Dendritic cell treated with granulocyte-macrophage colony-stimulating factor and Interleukin-4, amounts not matched to agents 40 ng/mL and 50 ng/mL, for 4 days (primary cell): ENCODE measurements at regions of chr12 and their contacts with region 1.

Region 1: DNA sequence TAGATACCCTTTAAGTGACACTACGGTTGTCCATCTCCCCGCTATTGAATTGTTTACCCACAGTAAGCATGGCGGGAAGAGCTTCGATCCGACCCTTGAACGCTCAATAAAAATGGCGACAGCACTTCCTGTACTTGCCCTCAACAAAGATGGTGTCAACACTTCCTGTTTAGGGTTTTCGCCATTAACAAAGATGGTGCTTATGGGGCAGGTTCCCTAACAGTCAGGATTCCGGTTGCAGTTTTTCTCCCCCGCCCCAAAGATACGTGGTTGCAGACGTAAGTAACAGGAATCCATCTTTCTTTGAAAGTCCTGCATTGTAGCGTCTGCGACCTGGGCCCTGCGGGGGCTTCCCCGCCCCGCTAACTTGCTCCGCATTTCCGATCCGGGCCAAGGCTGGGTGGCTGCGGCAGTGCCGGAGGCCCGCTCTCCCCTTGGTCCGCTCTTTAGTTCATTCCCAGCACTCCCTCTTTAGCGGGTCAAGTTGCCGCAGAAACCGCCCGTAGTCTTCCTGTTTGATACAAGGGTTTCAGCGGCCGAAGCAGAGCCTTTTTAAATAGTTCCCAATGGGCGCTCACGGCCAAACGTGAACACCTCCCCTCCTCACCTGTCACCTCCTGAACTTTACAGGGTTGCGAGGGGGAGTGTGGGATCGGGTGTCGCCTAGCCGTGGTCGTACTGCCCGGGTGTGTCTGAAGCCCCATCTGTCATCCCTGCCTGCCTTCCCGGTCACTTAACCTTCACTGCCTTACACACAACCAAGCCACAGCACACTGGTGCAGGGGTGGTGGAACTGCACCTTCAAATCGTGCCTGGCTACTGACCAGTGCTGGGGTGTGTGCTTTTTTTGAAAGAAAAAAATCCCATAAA is at the start of gene CRADD:
- H3K4me3 Mint-ChIP-seq: peak within 1 kb of the TSS; percentile 89
- H3K27ac Mint-ChIP-seq: peak within 1 kb of the TSS; percentile 100
- H3K4me1 Mint-ChIP-seq: peaks cover 20% of the 10 kb centered on the region
- H3K27me3 Mint-ChIP-seq: peaks cover 5% of the 10 kb centered on the region

Region 2: DNA sequence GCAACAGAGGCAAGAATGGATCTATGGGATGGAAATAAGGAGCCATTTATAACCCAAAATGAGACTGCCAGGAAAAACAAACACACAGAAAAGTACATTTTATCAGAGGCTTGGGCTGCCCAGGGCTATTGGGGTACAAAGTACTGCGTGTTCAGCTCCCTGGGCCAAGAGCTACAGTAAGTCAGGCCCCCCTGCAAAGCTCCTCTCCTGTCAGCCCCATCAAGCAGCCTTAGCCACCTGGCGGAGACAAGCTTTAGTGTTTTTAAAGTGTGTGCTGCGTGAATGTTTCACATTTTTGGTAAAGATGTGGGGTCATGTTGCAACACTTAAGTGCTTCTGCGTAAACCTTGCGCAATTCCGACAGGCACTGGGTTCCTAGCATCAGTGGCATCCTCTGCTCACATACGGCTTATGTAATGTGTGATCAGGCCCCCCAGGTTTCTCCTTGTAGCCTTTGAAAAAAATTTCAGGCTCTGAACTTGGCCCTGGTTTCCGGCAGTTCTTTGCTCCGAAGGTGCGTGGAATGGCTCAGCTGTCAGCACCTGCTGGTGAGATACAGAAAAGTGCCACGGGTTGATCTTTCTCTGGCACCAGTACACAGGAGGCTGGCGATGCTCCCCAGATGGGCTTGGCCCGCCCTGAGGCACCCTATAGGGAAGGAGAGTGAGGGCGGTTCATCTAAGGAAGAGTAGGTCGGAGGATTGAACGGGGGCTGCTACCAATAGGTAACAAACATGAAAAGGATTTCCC is 549.7 kb before region 1 on chr12:
- intact Hi-C with region 1: no loop called
- H3K4me3 Mint-ChIP-seq: no peak overlapping the region
- H3K27ac Mint-ChIP-seq: no peak overlapping the region
- H3K4me1 Mint-ChIP-seq: peaks cover 29% of the 10 kb centered on the region
- H3K27me3 Mint-ChIP-seq: no peaks in the 10 kb centered on the region

Region 3: GRCh38 chr12:93591137-93591868 is 86.1 kb before region 1 on chr12:
- intact Hi-C with region 1: loop called (anchors 5 kb)
- H3K4me3 Mint-ChIP-seq: peak overlapping the region; percentile 77
- H3K27ac Mint-ChIP-seq: peak overlapping the region; percentile 95
- H3K4me1 Mint-ChIP-seq: peaks cover 16% of the 10 kb centered on the region
- H3K27me3 Mint-ChIP-seq: peaks cover 60% of the 10 kb centered on the region

Region 4: DNA sequence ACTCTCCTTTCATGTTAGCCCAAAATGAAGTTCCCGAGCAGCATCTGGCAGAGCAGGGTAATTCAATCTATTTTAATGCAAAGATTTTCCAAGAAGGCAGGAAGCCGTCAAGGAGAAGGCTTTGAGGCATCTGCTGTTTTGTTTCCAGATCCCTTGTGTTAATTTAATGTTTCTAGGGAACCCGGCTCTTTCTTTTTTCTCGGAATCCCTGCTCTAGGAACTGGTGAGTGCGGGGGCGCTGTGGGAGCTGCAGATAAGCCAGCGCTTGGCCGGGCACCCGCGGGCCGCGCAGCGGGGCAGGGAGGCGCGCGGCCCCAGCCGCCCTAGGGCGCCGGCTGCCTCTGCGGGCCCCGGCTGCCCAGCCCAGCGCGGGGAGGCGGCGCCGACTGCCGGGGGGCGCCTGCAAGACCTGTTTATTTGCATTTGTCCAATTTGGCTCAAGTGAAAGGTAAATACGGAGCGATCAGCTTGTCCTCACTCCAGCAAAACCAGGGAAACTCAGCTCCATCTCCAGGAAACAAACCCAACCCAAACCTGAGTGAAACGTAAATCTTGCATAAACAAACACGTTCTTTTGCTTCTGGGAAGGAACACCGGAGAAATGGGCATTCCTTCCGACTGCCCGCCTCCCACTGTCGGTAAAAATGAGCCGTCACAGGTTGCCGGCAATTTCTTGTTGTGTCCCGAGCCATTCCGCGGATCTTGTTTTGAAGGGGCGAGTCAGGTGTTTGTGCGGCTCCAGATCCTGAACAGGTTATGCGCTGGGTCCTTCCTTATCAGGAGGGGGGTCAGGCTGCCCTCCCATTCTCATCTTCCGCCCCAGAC is 64.9 kb after region 1 on chr12:
- intact Hi-C with region 1: loop called (anchors 1 kb)
- H3K4me3 Mint-ChIP-seq: peak overlapping the region; percentile 80
- H3K27ac Mint-ChIP-seq: peak overlapping the region; percentile 93
- H3K4me1 Mint-ChIP-seq: peaks cover 50% of the 10 kb centered on the region
- H3K27me3 Mint-ChIP-seq: peaks cover 2% of the 10 kb centered on the region

Region 5: DNA sequence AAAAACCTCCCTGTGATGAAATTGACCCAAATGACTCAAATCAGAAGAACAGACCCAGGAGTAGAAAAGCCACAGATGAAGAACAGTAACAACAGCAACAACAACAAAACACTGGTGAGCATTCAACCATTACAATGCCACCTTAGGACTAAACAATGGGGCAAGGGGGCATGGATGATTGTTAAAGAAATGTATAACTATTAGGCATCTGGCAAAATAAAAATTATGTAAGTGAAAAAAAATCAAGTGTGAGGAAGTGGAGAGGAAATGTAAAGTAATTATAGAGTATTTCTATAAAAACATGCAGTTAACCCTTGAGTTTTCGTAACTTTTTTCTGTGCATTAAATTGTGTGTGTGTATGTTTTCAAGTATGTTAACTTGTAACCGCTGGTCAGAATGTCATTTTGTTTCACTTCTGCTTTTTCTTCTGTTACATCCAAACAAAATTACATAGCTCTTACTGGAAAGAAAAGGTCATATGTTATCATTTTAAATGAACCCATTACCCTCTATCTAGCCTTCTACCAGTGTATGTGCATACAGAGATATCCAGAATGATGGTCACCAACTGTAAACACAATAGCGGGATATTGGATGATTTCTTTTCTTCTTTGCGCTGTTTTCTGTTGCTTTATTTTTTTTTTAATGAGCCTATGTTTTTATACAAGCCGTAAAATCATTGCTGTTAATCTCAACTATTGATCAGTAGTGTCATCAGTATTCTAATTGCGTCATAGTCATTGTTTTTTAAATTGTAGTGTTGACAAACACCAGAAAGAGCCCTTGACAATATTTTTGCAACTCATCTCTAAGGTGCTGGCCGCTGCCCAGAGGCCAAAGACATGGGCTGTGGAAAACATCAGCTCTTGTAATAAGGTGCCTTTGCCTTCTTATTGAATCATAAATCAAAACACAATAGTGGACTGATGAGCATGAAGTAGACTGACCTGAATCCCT is 170.4 kb after region 1 on chr12:
- intact Hi-C with region 1: loop called (anchors 10 kb)
- H3K4me3 Mint-ChIP-seq: peak overlapping the region; percentile 30
- H3K27ac Mint-ChIP-seq: peak overlapping the region; percentile 96
- H3K4me1 Mint-ChIP-seq: peaks cover 47% of the 10 kb centered on the region
- H3K27me3 Mint-ChIP-seq: no peaks in the 10 kb centered on the region

Region 6: GRCh38 chr12:94101738-94102660 is 424.6 kb after region 1 on chr12:
- intact Hi-C with region 1: loop called (anchors 10 kb)
- H3K4me3 Mint-ChIP-seq: peak overlapping the region; percentile 68
- H3K27ac Mint-ChIP-seq: no peak overlapping the region
- H3K4me1 Mint-ChIP-seq: peaks cover 23% of the 10 kb centered on the region
- H3K27me3 Mint-ChIP-seq: peaks cover 50% of the 10 kb centered on the region